Prostate gland (tissue), 2 donors: ENCODE measurements at regions of chr4 and their contacts with region 1.

Region 1: DNA sequence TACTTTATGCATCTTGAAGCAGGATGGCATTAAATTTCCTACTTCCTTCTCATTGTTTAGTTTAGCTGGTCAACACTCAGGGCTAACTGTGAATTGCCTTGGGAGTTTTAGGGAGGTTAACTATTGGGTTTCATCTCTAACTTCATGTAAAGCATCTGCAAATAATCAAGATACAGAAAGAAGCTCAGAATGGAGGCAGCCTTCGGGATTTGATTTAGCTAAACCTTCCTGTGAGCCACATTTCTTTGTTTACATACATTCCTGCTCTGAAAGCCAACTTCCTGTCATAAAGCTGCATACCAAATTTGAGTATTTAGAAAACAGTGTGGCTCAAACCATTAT is 131.7 kb upstream of the PCDH18 start:
- DNase-seq: no peak
- H3K4me3 ChIP-seq: no peak overlapping the region
- H3K27ac ChIP-seq: peak overlapping the region; percentile 4 to 38
- H3K4me1 ChIP-seq: no peaks in the 10 kb centered on the region
- H3K27me3 ChIP-seq: no peaks in the 10 kb centered on the region
- CTCF ChIP-seq: no peak
- POLR2A ChIP-seq: no peak

Region 2: DNA sequence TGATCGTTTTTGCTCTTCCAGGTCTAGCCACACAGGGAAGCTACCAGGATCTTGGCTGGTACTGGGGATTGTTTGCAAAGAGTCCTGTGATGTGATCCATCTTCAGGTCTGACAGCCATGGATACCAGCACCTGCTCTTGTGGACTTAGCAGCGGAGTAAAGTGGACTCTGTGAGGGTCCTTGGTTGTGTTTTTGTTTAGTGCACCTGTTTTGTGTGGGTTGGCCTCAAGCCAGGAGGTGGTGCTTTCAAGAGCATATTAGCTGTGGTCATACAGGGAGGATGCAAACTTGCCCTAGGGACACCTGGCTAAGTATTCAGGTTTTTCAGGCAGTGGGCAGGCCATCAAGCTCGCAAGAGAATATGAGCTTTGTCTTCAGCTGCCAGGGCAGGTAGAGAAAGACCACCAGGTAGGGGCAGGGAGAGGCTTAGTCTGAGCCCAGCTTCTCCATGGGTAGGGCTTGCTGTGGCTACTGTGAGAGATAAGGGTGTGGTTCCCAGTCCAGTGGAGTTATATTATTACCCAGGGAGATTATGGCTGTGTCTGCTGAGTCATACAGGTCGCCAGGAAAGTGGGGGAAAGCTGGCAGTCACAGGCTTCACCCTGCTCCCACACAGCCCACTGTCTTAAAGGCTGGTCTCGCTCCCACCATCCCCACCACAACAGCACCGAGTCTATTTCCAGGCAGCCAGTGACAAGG is 425.4 kb before region 1 on chr4:
- intact Hi-C with region 1: no loop called
- DNase-seq: no peak
- H3K4me3 ChIP-seq: no peak overlapping the region
- H3K27ac ChIP-seq: no peak overlapping the region
- H3K4me1 ChIP-seq: no peaks in the 10 kb centered on the region
- H3K27me3 ChIP-seq: no peaks in the 10 kb centered on the region
- CTCF ChIP-seq: no peak
- POLR2A ChIP-seq: no peak

Region 3: DNA sequence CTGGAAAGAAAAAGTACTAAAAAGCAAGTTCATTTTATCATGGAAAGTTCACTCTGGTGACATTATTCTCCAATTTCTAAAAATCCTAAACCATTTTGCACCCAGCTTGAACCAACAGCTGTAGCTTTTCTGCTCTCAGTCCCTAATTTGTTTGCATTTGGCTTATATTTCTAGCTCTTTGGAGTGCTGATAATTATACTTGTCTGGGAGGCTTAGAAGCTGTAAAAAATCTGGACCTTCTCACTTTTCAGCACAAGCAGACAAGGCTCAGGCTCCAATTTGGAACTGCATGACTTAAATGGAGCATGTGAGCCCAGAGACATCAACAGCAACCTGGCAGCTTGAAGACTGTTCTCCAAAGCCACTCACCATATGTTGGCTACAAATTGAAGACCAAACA is 39.2 kb after region 1 on chr4:
- intact Hi-C with region 1: loop called (anchors 5 kb)
- DNase-seq: no peak
- H3K4me3 ChIP-seq: no peak overlapping the region
- H3K27ac ChIP-seq: no peak overlapping the region
- H3K4me1 ChIP-seq: no peaks in the 10 kb centered on the region
- H3K27me3 ChIP-seq: no peaks in the 10 kb centered on the region
- CTCF ChIP-seq: no peak
- POLR2A ChIP-seq: no peak

Region 4: GRCh38 chr4:137861682-137862081 is 197.7 kb after region 1 on chr4:
- intact Hi-C with region 1: no loop called
- DNase-seq: no peak
- H3K4me3 ChIP-seq: no peak overlapping the region
- H3K27ac ChIP-seq: no peak overlapping the region
- H3K4me1 ChIP-seq: no peaks in the 10 kb centered on the region
- H3K27me3 ChIP-seq: no peaks in the 10 kb centered on the region
- CTCF ChIP-seq: peak in 3 of 4 experiments; percentile 27 to 38 (median 29)
- POLR2A ChIP-seq: no peak